Activated T-helper 1 cell treated with anti-CD3 and anti-CD28 coated beads, Interleukin-12 subunit alpha, Interleukin-12 subunit beta, Interleukin-2, Interleukin-4 antibody, amounts not matched to agents 30 ng/mL and 10 ng/mL and 1 ng/mL, durations not matched to agents 14 hours and 24 hours and 36 hours (primary cell): ENCODE measurements at regions of chr2 and their contacts with region 1.

Region 1: DNA sequence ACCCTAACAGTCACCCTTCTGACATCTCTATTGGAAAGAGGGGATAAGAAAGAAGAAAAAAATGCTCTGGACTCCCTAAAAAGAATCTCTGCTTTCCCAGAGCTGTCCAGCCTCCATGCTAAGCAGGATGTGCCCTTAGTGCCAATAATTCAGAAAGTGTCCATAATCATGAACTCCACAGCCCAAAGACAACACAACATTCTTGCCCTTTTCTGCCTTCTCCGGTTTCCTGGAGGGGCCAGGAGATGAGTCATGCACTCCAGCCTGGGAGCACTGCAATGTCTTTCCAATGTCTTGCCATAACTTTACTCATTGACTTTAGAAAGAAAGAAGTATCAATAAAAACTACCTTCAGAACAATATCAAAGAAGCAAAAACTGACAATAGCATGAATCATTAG is 44.0 kb downstream of the KLF7 start:
- DNase-seq: no peak
- H3K4me3 Mint-ChIP-seq: no peak overlapping the region
- H3K27ac Mint-ChIP-seq: no peak overlapping the region
- H3K4me1 Mint-ChIP-seq: peaks cover 46% of the 10 kb centered on the region
- H3K27me3 Mint-ChIP-seq: no peaks in the 10 kb centered on the region

Region 2: GRCh38 chr2:207107551-207107950 is 14.2 kb before region 1 on chr2:
- intact Hi-C with region 1: loop called (anchors 2 kb)
- DNase-seq: no peak
- H3K4me3 Mint-ChIP-seq: no peak overlapping the region
- H3K27ac Mint-ChIP-seq: no peak overlapping the region
- H3K4me1 Mint-ChIP-seq: peaks cover 4% of the 10 kb centered on the region
- H3K27me3 Mint-ChIP-seq: no peaks in the 10 kb centered on the region

Region 3: GRCh38 chr2:207156451-207157161 is 34.8 kb after region 1 on chr2:
- intact Hi-C with region 1: loop called (anchors 1 kb)
- DNase-seq: peak; percentile 19
- H3K4me3 Mint-ChIP-seq: peak overlapping the region; percentile 0
- H3K27ac Mint-ChIP-seq: peak overlapping the region; percentile 41
- H3K4me1 Mint-ChIP-seq: peaks cover 75% of the 10 kb centered on the region
- H3K27me3 Mint-ChIP-seq: peaks cover 3% of the 10 kb centered on the region